ENCODE measurements at regions of chr7 and their contacts with region 1.

Region 1: DNA sequence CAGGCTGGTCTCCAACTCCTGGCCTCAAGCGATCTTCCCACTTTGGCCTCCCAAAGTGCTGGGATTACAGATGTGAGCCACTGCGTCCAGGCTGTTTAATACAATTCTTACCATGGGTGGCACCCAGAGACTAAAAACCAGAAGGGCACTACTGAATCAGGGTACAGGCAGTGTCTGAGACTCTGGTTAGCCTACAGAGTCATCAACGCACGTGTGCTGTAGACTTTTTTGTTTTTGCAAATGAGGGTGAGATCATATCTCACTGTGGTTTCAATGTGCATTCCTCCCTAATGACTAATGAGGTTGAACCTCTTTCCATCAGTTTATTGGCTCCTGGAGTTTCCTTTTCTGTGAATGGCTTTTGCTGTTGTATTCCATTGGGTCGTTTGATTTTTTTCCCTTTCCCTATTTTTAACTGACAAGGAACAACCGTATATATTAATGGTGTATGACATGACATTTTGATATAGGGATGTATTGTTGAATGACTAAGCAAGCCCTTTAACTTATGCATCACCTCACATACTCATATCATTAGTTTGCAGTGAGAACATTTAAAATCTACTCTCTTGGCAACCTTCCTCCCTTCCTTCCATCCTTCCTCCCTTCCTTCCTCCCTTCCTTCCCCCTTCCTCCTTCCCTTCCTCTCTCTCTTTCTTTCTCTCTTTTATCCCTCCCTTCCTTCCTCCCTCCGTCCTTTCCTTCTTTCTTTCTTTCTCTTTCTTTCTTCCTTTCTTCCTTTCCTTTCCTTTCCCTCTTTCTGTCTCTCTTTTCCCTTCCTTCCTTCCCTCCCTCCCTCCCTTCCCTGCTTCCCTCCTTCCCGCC is 9.3 kb upstream of the METTL27 start:
- DNase-seq: no peak
- ATAC-seq: peak; percentile 50 to 93

Region 2: GRCh38 chr7:73597978-73598782 is 253.4 kb before region 1 on chr7:
- intact Hi-C with region 1: no loop called
- DNase-seq: no peak
- ATAC-seq: no peak

Region 3: DNA sequence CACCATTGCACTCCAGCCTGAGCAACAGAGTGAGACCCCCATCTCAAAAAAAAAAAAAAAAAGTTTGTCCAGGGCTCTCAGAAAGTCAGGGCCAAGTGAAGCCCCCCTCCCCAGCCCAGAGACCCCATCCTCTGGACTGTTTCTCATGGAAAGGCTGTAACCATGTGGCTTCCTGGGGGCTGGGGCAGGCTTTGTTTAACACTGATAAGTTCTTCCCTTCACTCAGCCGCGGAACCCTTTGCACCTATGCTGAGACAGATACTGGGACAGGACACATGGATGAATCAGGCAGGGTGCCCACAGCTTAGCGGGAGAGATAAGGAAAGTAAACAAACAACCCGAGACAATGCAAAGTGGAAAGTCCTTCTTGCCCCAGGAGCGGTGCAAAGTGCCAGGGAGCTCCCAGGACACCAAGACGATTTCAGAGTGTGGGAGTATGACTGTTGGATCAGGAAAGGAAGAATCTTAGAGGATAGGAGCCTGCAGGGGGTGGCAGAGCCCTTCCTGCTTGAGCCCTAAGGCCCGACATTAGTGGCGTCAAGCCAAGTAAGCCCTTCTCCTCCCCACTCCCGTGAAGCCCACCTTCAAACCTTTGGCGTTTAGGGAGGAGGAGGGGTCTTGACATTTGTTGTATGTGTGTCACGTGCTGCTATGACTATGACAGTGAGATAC is 238.9 kb before region 1 on chr7:
- intact Hi-C with region 1: loop called (anchors 5 to 10 kb)
- DNase-seq: no peak
- ATAC-seq: peak in 1 of 2 donors; percentile 53

Region 4: GRCh38 chr7:73899731-73900142 is 48.1 kb after region 1 on chr7:
- intact Hi-C with region 1: no loop called
- DNase-seq: peak; percentile 54
- ATAC-seq: no peak

Region 5: GRCh38 chr7:73909996-73910395 is 58.4 kb after region 1 on chr7:
- intact Hi-C with region 1: no loop called
- DNase-seq: no peak
- ATAC-seq: no peak

Region 6: DNA sequence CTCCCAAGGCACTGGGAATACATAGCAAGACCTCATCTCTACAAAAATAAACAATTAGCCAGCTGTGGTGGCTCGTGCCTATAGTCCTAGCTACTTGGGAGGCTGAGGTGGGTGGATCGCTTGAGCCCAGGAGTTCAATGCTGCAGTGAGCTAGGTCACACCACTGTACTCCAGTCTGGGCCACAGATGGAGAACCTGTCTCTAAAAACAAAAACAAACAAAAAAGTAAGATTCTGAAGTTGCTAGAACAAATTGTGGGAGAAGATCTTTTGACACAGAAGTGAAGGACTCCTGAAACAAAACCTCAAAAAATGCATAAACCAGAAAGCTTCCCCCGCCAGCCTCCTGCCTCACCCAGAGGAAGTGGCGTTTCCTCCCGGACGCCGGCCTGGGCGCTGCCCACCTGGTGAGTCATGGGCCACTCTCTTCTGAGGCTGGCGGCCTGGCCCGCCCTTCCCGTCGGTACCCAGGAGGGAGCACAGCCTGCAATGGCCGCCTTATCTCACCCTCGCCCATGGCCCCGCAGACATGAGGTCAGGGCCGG is 150.9 kb after region 1 on chr7:
- intact Hi-C with region 1: no loop called
- DNase-seq: peak; percentile 84
- ATAC-seq: peak; percentile 59 to 80